ENCODE measurements at regions of chr3 and their contacts with region 1.

Region 1: DNA sequence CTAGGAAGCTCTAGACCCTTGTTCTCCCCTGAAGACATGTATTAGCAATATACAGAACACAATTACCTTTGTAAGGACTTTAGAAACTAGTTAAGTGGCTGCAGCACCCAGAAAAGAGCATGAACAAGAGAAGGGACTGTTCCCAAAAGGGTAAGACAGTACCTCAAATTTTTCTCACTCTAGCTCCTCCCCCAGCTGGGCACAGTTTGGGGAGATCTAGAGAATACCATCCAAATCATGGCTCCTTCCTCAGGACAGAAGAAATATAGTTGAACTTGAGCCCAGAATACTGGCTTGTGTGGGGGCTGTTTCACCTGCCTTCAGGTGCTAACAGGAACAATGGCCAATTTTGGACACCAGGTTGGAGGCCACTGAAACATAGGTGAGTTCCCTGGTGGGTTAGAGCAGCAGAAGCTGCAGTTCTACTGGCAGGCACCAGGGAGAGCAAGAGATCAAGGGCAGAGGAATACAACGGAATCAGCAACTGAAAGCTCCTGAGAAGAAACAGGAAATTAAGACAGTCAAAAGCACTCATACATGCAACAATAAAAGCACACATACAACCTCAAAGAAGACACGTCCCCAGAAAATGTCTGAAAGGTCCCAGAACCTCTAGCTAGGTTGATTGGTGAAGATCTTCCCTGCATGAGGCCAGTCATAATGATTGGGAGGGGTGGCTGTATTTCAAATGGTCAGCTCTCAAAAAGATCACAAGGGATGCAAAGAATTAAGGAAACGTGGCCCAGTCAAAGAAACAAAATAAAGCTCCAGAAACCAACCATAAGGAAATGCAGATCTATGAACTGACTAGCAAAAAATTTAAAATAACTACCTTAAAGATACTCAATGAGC is 104.9 kb upstream of the ASB14 start:
- DNase-seq: peak; percentile 77
- H3K4me3 Mint-ChIP-seq: no peak overlapping the region
- H3K27ac Mint-ChIP-seq: peak overlapping the region; percentile 9
- H3K4me1 Mint-ChIP-seq: peaks cover 17% of the 10 kb centered on the region
- H3K27me3 Mint-ChIP-seq: peaks cover 8% of the 10 kb centered on the region

Region 2: GRCh38 chr3:57169872-57170623 is 227.4 kb before region 1 on chr3:
- CTCF ChIA-PET with region 1: interaction called, 10 read pairs
- DNase-seq: peak; percentile 75
- H3K4me3 Mint-ChIP-seq: peak overlapping the region; percentile 48
- H3K27ac Mint-ChIP-seq: no peak overlapping the region
- H3K4me1 Mint-ChIP-seq: peaks cover 13% of the 10 kb centered on the region
- H3K27me3 Mint-ChIP-seq: peaks cover 82% of the 10 kb centered on the region

Region 3: GRCh38 chr3:57281715-57282114 is 115.7 kb before region 1 on chr3:
- CTCF ChIA-PET with region 1: no interaction called
- DNase-seq: no peak
- H3K4me3 Mint-ChIP-seq: no peak overlapping the region
- H3K27ac Mint-ChIP-seq: no peak overlapping the region
- H3K4me1 Mint-ChIP-seq: no peaks in the 10 kb centered on the region
- H3K27me3 Mint-ChIP-seq: no peaks in the 10 kb centered on the region

Region 4: GRCh38 chr3:57382933-57383332 is 14.5 kb before region 1 on chr3:
- CTCF ChIA-PET with region 1: interaction called, 15 read pairs
- DNase-seq: no peak
- H3K4me3 Mint-ChIP-seq: no peak overlapping the region
- H3K27ac Mint-ChIP-seq: no peak overlapping the region
- H3K4me1 Mint-ChIP-seq: no peaks in the 10 kb centered on the region
- H3K27me3 Mint-ChIP-seq: peaks cover 7% of the 10 kb centered on the region

Region 5: DNA sequence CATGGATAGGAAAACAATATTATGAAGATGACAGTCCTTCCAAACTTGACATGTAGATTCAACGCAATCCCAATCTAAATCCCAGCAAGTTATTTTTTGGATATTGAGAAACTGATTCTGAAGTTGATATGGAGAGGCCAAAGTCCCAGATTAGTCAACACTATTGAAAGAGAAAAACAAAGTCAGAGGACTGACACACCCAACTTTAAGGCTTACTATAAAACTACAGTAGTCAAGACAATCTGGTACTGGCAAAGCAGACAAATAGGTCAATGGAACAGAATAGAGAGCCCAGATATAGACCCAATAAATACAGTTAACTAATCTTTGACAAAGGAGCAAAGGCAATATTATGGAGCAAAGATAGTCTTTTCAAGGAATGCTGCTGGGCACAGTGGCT is 14.3 kb after region 1 on chr3:
- CTCF ChIA-PET with region 1: interaction called, 13 read pairs
- DNase-seq: no peak
- H3K4me3 Mint-ChIP-seq: no peak overlapping the region
- H3K27ac Mint-ChIP-seq: no peak overlapping the region
- H3K4me1 Mint-ChIP-seq: no peaks in the 10 kb centered on the region
- H3K27me3 Mint-ChIP-seq: peaks cover 4% of the 10 kb centered on the region

Region 6: GRCh38 chr3:57826245-57826951 is 429.0 kb after region 1 on chr3:
- CTCF ChIA-PET with region 1: interaction called, 12 read pairs
- DNase-seq: no peak
- H3K4me3 Mint-ChIP-seq: no peak overlapping the region
- H3K27ac Mint-ChIP-seq: no peak overlapping the region
- H3K4me1 Mint-ChIP-seq: no peaks in the 10 kb centered on the region
- H3K27me3 Mint-ChIP-seq: no peaks in the 10 kb centered on the region

Region 7: GRCh38 chr3:57852896-57853295 is 455.5 kb after region 1 on chr3:
- CTCF ChIA-PET with region 1: interaction called, 44 read pairs
- DNase-seq: no peak
- H3K4me3 Mint-ChIP-seq: no peak overlapping the region
- H3K27ac Mint-ChIP-seq: no peak overlapping the region
- H3K4me1 Mint-ChIP-seq: no peaks in the 10 kb centered on the region
- H3K27me3 Mint-ChIP-seq: no peaks in the 10 kb centered on the region